Activated T-helper 1 cell treated with anti-CD3 and anti-CD28 coated beads, Interleukin-12 subunit alpha, Interleukin-12 subunit beta, Interleukin-2, Interleukin-4 antibody, amounts not matched to agents 30 ng/mL and 10 ng/mL and 1 ng/mL, durations not matched to agents 14 hours and 24 hours and 36 hours (primary cell): ENCODE measurements at regions of chr5 and their contacts with region 1.

Region 1: GRCh38 chr5:113678924-113679575 is 165.6 kb downstream of the YTHDC2 start:
- DNase-seq: no peak
- H3K4me3 Mint-ChIP-seq: no peak overlapping the region
- H3K27ac Mint-ChIP-seq: no peak overlapping the region
- H3K4me1 Mint-ChIP-seq: no peaks in the 10 kb centered on the region
- H3K27me3 Mint-ChIP-seq: no peaks in the 10 kb centered on the region

Region 2: GRCh38 chr5:114449860-114450421 is 770.9 kb after region 1 on chr5:
- intact Hi-C with region 1: loop called (anchors 1 kb)
- DNase-seq: peak; percentile 7
- H3K4me3 Mint-ChIP-seq: no peak overlapping the region
- H3K27ac Mint-ChIP-seq: no peak overlapping the region
- H3K4me1 Mint-ChIP-seq: peaks cover 5% of the 10 kb centered on the region
- H3K27me3 Mint-ChIP-seq: no peaks in the 10 kb centered on the region

Region 3: DNA sequence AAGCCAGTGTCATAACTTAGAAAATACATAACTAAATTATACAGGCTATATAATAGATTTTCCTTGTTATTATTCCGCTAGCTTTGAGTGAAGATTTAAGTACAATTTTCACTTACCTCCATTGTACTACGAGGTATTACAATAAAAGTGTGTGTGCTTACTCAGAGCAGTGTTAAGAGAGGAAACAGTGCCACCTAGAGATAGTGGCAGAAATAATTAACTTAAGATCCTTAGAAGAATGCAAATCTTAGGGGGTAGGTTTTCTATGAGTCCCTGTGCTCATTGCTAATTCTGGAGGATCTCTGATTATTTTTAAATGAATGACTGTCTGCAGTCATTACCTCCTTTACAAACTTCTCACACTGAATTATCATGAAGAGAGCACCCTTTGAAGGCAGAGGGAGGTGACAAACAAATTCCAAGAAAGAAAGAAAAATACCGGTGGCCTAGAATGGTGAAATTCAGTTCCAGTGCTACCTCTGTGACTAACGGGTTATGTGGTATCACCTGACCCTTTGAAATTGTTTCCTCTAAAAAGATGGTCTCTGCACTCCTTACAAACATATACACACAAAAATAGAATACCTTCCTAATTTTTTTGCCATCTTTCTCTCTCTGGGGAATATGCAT is 1110.8 kb after region 1 on chr5:
- intact Hi-C with region 1: loop called (anchors 5 kb)
- DNase-seq: no peak
- H3K4me3 Mint-ChIP-seq: no peak overlapping the region
- H3K27ac Mint-ChIP-seq: no peak overlapping the region
- H3K4me1 Mint-ChIP-seq: no peaks in the 10 kb centered on the region
- H3K27me3 Mint-ChIP-seq: no peaks in the 10 kb centered on the region